A549 (cell line): ENCODE measurements at regions of chr15 and their contacts with region 1.

Region 1: GRCh38 chr15:29925227-29926082 is 103.2 kb upstream of the TJP1 start:
- DNase-seq: peak; percentile 84 to 92
- ATAC-seq: peak; percentile 81 to 88
- H3K4me3 ChIP-seq: no peak overlapping the region
- H3K27ac ChIP-seq: peak overlapping the region; percentile 70 to 86
- H3K4me1 ChIP-seq: peaks cover 60% of the 10 kb centered on the region
- CTCF ChIP-seq: peak; percentile 97
- EP300 ChIP-seq: peak in 1 of 2 experiments; percentile 32; a peak in 1 of 5 replicates
- POLR2A ChIP-seq: no peak
- RAD21 ChIP-seq: peak; percentile 94 to 99

Region 2: GRCh38 chr15:29522373-29523276 is 402.8 kb before region 1 on chr15:
- CTCF ChIA-PET with region 1: no interaction called
- POLR2A ChIA-PET with region 1: no interaction called
- DNase-seq: peak; percentile 54 to 64
- ATAC-seq: peak; percentile 65 to 72; a peak in 5 of 6 replicates
- H3K4me3 ChIP-seq: no peak overlapping the region
- H3K27ac ChIP-seq: peak overlapping the region in 1 of 2 experiments; percentile 27; a peak in 1 of 6 replicates
- H3K4me1 ChIP-seq: peaks cover 17% of the 10 kb centered on the region
- CTCF ChIP-seq: no peak
- EP300 ChIP-seq: no peak
- POLR2A ChIP-seq: no peak
- RAD21 ChIP-seq: no peak

Region 3: GRCh38 chr15:29747837-29748417 is 177.5 kb before region 1 on chr15:
- CTCF ChIA-PET with region 1: interaction called, 128 read pairs
- POLR2A ChIA-PET with region 1: interaction called, 7 read pairs
- DNase-seq: peak in 1 of 2 experiments; percentile 31
- ATAC-seq: peak; percentile 44 to 58; a peak in 4 of 6 replicates
- H3K4me3 ChIP-seq: no peak overlapping the region
- H3K27ac ChIP-seq: no peak overlapping the region
- H3K4me1 ChIP-seq: peaks cover 16% of the 10 kb centered on the region; the same call in 2 of the 3 replicates
- CTCF ChIP-seq: peak; percentile 61
- EP300 ChIP-seq: no peak
- POLR2A ChIP-seq: no peak
- RAD21 ChIP-seq: peak; percentile 82 to 83

Region 4: GRCh38 chr15:29821416-29822131 is 103.9 kb before region 1 on chr15:
- CTCF ChIA-PET with region 1: interaction called, 52 read pairs
- POLR2A ChIA-PET with region 1: interaction called, 86 read pairs
- DNase-seq: peak; percentile 75 to 89
- ATAC-seq: peak; percentile 79 to 81
- H3K4me3 ChIP-seq: peak overlapping the region; percentile 66
- H3K27ac ChIP-seq: peak overlapping the region; percentile 95 to 96
- H3K4me1 ChIP-seq: peaks cover 16% of the 10 kb centered on the region; the same call in 2 of the 3 replicates
- CTCF ChIP-seq: no peak
- EP300 ChIP-seq: no peak
- POLR2A ChIP-seq: no peak
- RAD21 ChIP-seq: no peak; a peak in 2 of 5 replicates

Region 5: GRCh38 chr15:29857221-29857789 is 68.2 kb before region 1 on chr15:
- CTCF ChIA-PET with region 1: interaction called, 11 read pairs
- POLR2A ChIA-PET with region 1: no interaction called
- DNase-seq: peak in 1 of 2 experiments; percentile 68
- ATAC-seq: no peak; a peak in 1 of 6 replicates
- H3K4me3 ChIP-seq: no peak overlapping the region
- H3K27ac ChIP-seq: no peak overlapping the region
- H3K4me1 ChIP-seq: peaks cover 21% of the 10 kb centered on the region
- CTCF ChIP-seq: no peak
- EP300 ChIP-seq: no peak
- POLR2A ChIP-seq: no peak
- RAD21 ChIP-seq: no peak

Region 6: GRCh38 chr15:29890336-29891095 is 34.9 kb before region 1 on chr15:
- CTCF ChIA-PET with region 1: interaction called, 14 read pairs
- POLR2A ChIA-PET with region 1: no interaction called
- DNase-seq: no peak
- ATAC-seq: no peak
- H3K4me3 ChIP-seq: no peak overlapping the region
- H3K27ac ChIP-seq: no peak overlapping the region
- H3K4me1 ChIP-seq: peaks cover 8% of the 10 kb centered on the region; the same call in 2 of the 3 replicates
- CTCF ChIP-seq: no peak
- EP300 ChIP-seq: no peak
- POLR2A ChIP-seq: no peak
- RAD21 ChIP-seq: no peak

Region 7: DNA sequence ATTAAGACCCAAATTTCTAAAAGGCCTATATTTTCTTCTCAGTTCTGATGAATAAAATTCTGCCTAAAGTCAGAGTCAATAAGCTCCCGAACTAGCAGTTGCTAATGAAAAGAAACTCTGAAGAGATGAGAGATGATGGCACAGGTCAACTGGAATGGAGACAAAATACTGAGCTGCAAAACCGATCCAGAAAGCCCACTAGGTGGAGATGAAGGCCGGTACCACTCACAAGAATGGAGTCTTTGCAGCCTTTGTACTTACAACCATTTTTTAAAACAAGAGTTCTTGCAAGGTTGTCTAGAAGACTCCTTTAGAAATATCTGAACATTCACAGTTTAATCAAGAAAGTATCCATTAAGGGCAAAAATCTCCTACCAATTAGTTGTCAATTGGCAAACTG is 16.7 kb after region 1 on chr15:
- CTCF ChIA-PET with region 1: interaction called, 47 read pairs
- POLR2A ChIA-PET with region 1: interaction called, 3 read pairs
- DNase-seq: peak in 1 of 2 experiments; percentile 39
- ATAC-seq: peak; percentile 52 to 78; a peak in 4 of 6 replicates
- H3K4me3 ChIP-seq: no peak overlapping the region
- H3K27ac ChIP-seq: no peak overlapping the region
- H3K4me1 ChIP-seq: peaks cover 27% of the 10 kb centered on the region
- CTCF ChIP-seq: peak; percentile 46
- EP300 ChIP-seq: no peak
- POLR2A ChIP-seq: no peak
- RAD21 ChIP-seq: peak; percentile 43 to 48; a peak in 3 of 5 replicates

Region 8: GRCh38 chr15:30073915-30074314 is 148.5 kb after region 1 on chr15:
- CTCF ChIA-PET with region 1: interaction called, 17 read pairs
- POLR2A ChIA-PET with region 1: no interaction called
- DNase-seq: no peak
- ATAC-seq: no peak
- H3K4me3 ChIP-seq: no peak overlapping the region
- H3K27ac ChIP-seq: no peak overlapping the region
- H3K4me1 ChIP-seq: 0 out of 3 replicates have a peak, but pooled peaks cover 3% of the 10 kb centered on the region
- CTCF ChIP-seq: no peak
- EP300 ChIP-seq: no peak
- POLR2A ChIP-seq: no peak
- RAD21 ChIP-seq: no peak